ENCODE measurements at regions of chr2 and their contacts with region 1.

Region 1: GRCh38 chr2:55914786-55915185 is 8.8 kb downstream of the EFEMP1 start:
- DNase-seq: no peak
- H3K4me3 Mint-ChIP-seq: no peak overlapping the region
- H3K27ac Mint-ChIP-seq: no peak overlapping the region
- H3K4me1 Mint-ChIP-seq: no peaks in the 10 kb centered on the region
- H3K27me3 Mint-ChIP-seq: no peaks in the 10 kb centered on the region
- CTCF ChIP-seq: no peak

Region 2: DNA sequence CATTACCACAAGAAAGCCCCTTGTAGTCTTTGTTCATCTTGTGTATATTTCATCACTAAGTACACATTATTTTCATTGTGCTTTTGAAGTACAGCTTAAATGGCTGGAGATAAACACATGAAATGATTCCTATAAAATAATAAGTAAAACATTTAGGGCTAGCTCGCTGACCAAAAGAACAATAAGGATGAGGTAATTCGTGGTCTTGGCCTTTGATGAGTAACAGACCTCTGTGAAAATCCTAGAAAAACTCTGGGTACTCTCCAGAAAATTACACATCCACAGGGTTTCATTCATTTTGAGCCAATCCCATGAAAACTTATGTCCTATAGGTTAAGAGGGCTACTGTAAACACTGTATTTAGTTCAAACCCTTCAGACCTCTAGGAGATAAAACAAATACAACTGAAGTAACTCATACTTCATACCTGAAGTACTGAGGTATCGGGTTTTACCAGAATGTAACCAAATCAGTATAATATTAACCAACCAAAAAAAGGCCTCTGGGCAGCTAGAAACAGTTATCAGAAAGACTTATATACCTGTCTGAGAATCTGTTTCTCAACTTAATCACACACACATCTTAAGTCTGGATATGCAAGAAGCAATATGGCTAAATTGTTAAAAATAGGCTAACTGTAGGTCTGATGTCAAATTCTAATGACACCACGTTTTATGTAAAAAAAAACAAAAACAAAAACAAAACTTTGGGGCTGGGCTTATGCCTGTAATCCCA is 364.3 kb before region 1 on chr2:
- CTCF ChIA-PET with region 1: no interaction called
- intact Hi-C with region 1: loop called (anchors 5 kb)
- DNase-seq: no peak
- H3K4me3 Mint-ChIP-seq: no peak overlapping the region
- H3K27ac Mint-ChIP-seq: no peak overlapping the region
- H3K4me1 Mint-ChIP-seq: no peaks in the 10 kb centered on the region
- H3K27me3 Mint-ChIP-seq: no peaks in the 10 kb centered on the region
- CTCF ChIP-seq: no peak

Region 3: GRCh38 chr2:55844986-55845385 is 69.8 kb before region 1 on chr2:
- CTCF ChIA-PET with region 1: no interaction called
- intact Hi-C with region 1: no loop called
- DNase-seq: no peak
- H3K4me3 Mint-ChIP-seq: no peak overlapping the region
- H3K27ac Mint-ChIP-seq: no peak overlapping the region
- H3K4me1 Mint-ChIP-seq: peaks cover 9% of the 10 kb centered on the region
- H3K27me3 Mint-ChIP-seq: no peaks in the 10 kb centered on the region
- CTCF ChIP-seq: no peak

Measured in Calu3 (cell line).